SK-N-SH (cell line): ENCODE measurements at regions of chr4 and their contacts with region 1.

Region 1: DNA sequence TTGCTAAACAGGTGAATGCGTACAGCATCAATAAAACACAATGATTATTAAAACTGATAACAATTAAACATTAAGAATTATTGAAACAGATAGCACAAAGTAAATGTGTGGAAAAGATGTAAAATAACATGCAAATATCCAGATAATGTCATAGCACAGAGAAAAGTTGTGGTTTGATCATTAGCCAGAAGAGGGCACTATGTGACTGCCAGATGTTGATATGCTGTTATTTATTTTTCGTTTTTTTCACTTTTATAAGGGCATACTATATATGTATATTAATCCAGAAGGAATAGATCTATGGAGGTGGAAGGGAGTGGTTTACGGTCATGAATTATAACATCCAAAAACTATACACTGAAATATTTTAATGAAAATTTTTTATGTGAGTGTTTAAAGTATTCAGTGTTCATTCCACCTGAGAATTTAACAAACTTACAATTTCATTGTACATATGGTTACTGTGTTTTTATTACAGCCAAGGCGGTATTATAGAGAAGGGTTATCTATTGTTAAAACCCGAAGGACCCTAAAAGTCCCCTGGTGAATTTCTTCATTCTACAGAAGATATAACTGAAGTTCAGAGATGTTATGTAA is 211.9 kb upstream of the UGT8 start:
- DNase-seq: peak; percentile 24
- H3K4me3 ChIP-seq: no peak overlapping the region; a peak in 1 of 4 replicates
- H3K27ac ChIP-seq: no peak overlapping the region
- H3K4me1 ChIP-seq: peaks cover 0 to 17% of the 10 kb centered on the region in 2 experiments
- H3K27me3 ChIP-seq: no peaks in the 10 kb centered on the region; the same call in 1 of the 2 replicates
- CTCF ChIP-seq: peak; percentile 87
- EP300 ChIP-seq: no peak
- RAD21 ChIP-seq: peak; percentile 91

Region 2: DNA sequence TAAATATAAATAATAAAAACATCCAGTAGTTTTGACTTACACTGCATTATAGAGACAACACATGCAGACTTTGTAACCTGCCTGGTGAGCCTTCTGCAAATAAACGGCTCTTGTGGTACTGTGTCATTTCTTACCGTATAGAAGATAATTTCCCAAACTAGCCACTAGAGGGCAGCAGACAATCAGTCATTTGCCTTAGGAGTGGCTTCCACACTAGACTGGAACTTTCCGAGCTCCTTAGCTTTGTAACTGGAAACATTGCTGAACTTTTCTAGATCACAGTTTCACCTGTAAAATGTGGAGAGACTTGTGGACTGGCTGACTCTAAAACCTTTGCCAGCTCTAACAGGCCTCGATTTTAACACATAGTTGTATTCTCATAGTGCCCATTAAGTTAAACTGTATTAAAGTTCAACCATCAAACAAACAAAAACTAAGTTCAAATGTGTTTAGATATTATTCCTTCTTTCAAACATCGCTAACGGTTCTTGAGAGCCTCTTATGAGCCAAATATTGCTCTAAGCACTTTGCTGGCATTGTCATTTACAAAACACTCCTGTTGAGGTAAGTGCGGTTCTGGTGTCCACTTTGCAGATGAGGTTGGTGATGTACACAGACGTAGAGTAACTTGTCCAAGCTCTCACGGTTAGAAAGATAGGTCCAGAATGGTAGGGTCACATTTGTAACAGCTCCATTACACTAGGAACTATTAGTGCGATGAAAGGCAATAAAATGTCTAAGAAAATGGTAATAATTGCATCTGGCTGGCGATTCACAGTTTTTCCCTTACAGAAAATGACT is 991.8 kb before region 1 on chr4:
- CTCF ChIA-PET with region 1: interaction called, 47 read pairs
- POLR2A ChIA-PET with region 1: no interaction called
- DNase-seq: peak; percentile 47
- H3K4me3 ChIP-seq: no peak overlapping the region; a peak in 1 of 4 replicates
- H3K27ac ChIP-seq: no peak overlapping the region
- H3K4me1 ChIP-seq: no peaks in the 10 kb centered on the region
- H3K27me3 ChIP-seq: no peaks in the 10 kb centered on the region
- CTCF ChIP-seq: peak; percentile 82
- EP300 ChIP-seq: peak in 1 of 2 experiments; percentile 75; a peak in 2 of 4 replicates
- RAD21 ChIP-seq: peak; percentile 99

Region 3: GRCh38 chr4:113952452-113953029 is 434.2 kb before region 1 on chr4:
- CTCF ChIA-PET with region 1: interaction called, 10 read pairs
- POLR2A ChIA-PET with region 1: no interaction called
- DNase-seq: peak; percentile 22
- H3K4me3 ChIP-seq: no peak overlapping the region
- H3K27ac ChIP-seq: peak overlapping the region in 1 of 2 experiments; percentile 15; a peak in 2 of 4 replicates
- H3K4me1 ChIP-seq: peaks cover 2 to 54% of the 10 kb centered on the region in 2 experiments; a peak in 3 of 4 replicates
- H3K27me3 ChIP-seq: no peaks in the 10 kb centered on the region
- CTCF ChIP-seq: peak; percentile 73
- EP300 ChIP-seq: no peak
- RAD21 ChIP-seq: peak; percentile 87

Region 4: DNA sequence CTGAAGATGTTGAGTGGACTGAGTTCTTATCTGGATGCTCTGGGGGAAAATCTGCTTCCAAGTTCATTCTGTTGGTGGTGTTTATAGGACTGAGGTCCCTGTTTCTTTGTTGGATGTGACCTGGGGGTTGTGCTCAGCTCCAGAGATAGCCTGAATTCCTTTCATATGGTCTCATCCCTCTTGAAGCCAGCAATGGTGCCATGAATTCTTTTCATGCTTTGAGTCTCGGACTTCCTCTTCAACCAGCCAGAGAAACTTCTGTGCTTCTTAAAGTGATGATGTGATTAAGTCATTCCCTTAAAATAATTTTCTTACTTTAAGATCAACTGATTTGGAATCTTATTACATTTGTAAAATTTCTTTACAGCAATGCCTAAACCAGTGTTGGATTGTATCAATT is 21.9 kb before region 1 on chr4:
- CTCF ChIA-PET with region 1: no interaction called
- POLR2A ChIA-PET with region 1: no interaction called
- DNase-seq: no peak
- H3K4me3 ChIP-seq: peak overlapping the region in 1 of 2 experiments; percentile 16; a peak in 2 of 4 replicates
- H3K27ac ChIP-seq: peak overlapping the region; percentile 67 to 83; a peak in 3 of 4 replicates
- H3K4me1 ChIP-seq: peaks cover 0 to 4% of the 10 kb centered on the region in 2 experiments; a peak in 2 of 4 replicates
- H3K27me3 ChIP-seq: no peaks in the 10 kb centered on the region
- CTCF ChIP-seq: no peak
- EP300 ChIP-seq: peak in 1 of 2 experiments; percentile 93; a peak in 2 of 4 replicates
- RAD21 ChIP-seq: no peak

Region 5: DNA sequence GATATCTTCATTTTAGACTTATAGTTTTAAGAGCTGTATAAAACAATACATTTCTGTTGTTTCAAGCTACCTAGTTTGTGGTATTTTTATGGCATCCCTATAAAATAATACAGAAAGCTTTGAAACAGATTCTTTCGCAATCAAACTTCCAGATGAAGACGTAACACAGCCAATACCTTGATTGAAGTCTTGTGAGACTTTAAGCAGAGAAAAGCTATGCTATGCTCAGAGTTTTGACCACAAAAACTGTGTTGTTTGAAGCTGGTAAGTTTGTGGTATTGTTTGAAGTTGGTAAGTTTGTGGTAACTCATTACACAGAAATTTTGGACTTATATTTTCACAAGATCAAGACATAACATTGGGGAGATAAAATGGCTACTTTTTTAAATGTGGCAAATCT is 10.1 kb after region 1 on chr4:
- CTCF ChIA-PET with region 1: interaction called, 10 read pairs
- POLR2A ChIA-PET with region 1: no interaction called
- DNase-seq: no peak
- H3K4me3 ChIP-seq: no peak overlapping the region
- H3K27ac ChIP-seq: no peak overlapping the region
- H3K4me1 ChIP-seq: no peaks in the 10 kb centered on the region
- H3K27me3 ChIP-seq: no peaks in the 10 kb centered on the region; the same call in 1 of the 2 replicates
- CTCF ChIP-seq: no peak
- EP300 ChIP-seq: no peak
- RAD21 ChIP-seq: no peak

Region 6: GRCh38 chr4:114659386-114660008 is 272.8 kb after region 1 on chr4:
- CTCF ChIA-PET with region 1: interaction called, 27 read pairs
- POLR2A ChIA-PET with region 1: no interaction called
- DNase-seq: peak; percentile 60
- H3K4me3 ChIP-seq: no peak overlapping the region; a peak in 1 of 4 replicates
- H3K27ac ChIP-seq: no peak overlapping the region
- H3K4me1 ChIP-seq: no peaks in the 10 kb centered on the region
- H3K27me3 ChIP-seq: peaks cover 39% of the 10 kb centered on the region; the same call in 1 of the 2 replicates
- CTCF ChIP-seq: peak; percentile 89
- EP300 ChIP-seq: no peak
- RAD21 ChIP-seq: peak; percentile 79

Region 7: GRCh38 chr4:114694770-114695169 is 308.0 kb after region 1 on chr4:
- CTCF ChIA-PET with region 1: interaction called, 27 read pairs
- POLR2A ChIA-PET with region 1: no interaction called
- DNase-seq: peak; percentile 4
- H3K4me3 ChIP-seq: no peak overlapping the region
- H3K27ac ChIP-seq: no peak overlapping the region
- H3K4me1 ChIP-seq: no peaks in the 10 kb centered on the region
- H3K27me3 ChIP-seq: no peaks in the 10 kb centered on the region
- CTCF ChIP-seq: peak; percentile 73
- EP300 ChIP-seq: no peak
- RAD21 ChIP-seq: peak; percentile 80